Activated B cell treated with CpG ODN at 0.5 μM for 24 hours (primary cell): ENCODE measurements at regions of chr6 and their contacts with region 1.

Region 1: DNA sequence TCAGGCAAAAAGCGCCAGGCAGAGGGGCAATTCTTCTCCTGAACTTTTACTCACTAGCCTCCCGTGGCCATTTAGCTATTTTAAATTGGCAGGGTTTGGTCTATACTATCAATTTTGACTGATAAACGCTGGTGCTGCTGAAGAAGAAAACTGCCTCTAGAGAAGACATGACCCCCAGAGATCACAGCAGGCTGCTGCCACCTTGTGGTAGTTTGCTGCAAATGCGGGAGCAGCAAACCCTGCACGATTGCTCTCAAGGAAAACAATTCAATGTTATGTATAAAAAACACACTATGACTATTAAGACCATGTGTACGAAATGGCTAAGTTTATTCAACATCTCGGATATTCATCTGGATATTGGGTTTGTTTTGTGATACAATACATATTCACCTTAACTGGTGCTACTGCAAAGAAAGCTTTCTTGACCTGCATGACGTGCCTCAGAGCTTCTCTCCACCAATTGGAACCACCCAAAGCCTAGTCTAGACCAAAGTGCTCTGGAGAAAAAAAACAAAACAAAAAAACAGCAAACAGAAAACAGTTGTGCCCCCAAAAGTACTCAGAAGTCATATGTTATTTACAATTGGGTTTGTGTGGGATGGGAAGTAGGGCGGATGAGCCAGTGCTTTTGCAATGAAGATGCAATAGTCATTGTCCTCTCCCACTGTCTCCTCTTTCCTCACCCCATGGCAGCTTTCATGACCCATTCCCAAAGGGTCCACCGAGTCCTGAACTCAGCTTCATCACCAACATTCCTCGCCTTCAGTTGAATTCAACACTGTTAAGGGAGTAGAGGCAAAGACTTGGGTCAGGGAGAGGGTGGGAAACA is 19.6 kb upstream of the IL17F start:
- DNase-seq: peak; percentile 33
- ATAC-seq: peak; percentile 70
- H3K4me3 Mint-ChIP-seq: no peak overlapping the region
- H3K27ac Mint-ChIP-seq: no peak overlapping the region
- H3K4me1 Mint-ChIP-seq: peaks cover 3% of the 10 kb centered on the region
- H3K27me3 Mint-ChIP-seq: no peaks in the 10 kb centered on the region
- CTCF ChIP-seq: peak; percentile 94

Region 2: DNA sequence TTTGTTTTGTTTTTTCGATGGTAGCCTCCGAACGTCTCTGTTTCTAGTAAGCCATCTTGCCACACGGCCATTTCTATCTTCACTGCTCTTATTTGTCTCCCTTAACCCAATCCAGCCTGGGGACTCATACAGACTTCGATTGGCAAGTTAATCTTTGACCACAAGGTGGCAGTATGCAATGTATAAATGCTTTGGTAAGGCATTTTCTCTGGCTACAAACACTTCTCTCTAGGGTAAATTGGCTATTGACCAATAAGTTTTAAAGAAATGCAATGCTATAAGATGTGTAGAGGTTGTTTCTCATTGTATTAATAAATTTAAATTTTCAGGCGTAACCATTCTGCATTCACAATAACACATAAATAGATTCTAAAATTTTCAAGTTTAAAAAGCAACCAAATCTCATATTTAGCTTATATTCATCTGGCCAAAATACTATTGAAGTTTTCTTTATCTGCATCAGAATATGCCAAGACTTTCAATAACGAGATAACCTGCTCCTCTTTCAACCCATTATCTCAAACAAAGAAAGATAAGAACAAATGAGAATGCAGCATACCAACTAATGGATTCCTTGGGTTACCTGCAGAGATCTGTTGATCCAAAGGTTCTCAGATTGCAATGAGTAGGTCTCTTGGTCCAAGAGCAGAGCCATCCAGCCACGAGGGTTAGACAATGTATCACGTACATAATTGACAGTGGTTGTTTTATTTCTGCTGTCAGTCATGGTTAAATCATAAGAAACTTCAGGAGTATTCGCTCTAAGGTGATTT is 408.4 kb before region 1 on chr6:
- CTCF ChIA-PET with region 1: no interaction called
- POLR2A ChIA-PET with region 1: no interaction called
- intact Hi-C with region 1: loop called (anchors 1 kb)
- DNase-seq: no peak
- ATAC-seq: no peak
- H3K4me3 Mint-ChIP-seq: no peak overlapping the region
- H3K27ac Mint-ChIP-seq: no peak overlapping the region
- H3K4me1 Mint-ChIP-seq: no peaks in the 10 kb centered on the region
- H3K27me3 Mint-ChIP-seq: peaks cover 18% of the 10 kb centered on the region
- CTCF ChIP-seq: peak; percentile 30

Region 3: GRCh38 chr6:52063584-52064344 is 200.2 kb before region 1 on chr6:
- CTCF ChIA-PET with region 1: interaction called, 4 read pairs
- POLR2A ChIA-PET with region 1: no interaction called
- intact Hi-C with region 1: loop called (anchors 1 kb)
- DNase-seq: peak; percentile 18
- ATAC-seq: peak; percentile 99
- H3K4me3 Mint-ChIP-seq: peak overlapping the region; percentile 77
- H3K27ac Mint-ChIP-seq: peak overlapping the region; percentile 25
- H3K4me1 Mint-ChIP-seq: peaks cover 7% of the 10 kb centered on the region
- H3K27me3 Mint-ChIP-seq: no peaks in the 10 kb centered on the region
- CTCF ChIP-seq: no peak

Region 4: DNA sequence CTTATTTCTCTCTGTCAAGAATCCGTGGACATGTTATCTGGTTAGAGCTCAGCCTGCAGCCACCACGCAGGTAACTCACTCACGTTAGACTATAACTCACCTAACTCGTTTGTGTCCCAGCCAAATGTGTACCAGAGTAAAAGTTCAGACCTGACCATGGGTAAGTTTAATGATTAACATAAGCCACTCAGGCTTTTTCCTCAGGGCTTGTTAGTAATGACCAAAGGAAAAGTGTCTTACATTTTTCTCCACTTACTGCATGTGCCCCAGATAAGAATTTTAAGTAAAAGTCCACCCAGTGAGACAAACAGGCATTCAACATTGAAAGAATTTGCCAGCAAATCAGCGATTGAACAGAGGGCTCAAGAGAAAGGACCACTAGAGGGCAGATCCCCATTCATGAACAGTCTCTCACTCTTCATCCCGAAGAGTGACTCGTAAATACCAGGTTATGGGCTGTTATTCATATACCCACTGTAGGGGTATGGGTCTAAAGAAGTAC is 176.4 kb before region 1 on chr6 and contains the start of gene PKHD1:
- CTCF ChIA-PET with region 1: no interaction called
- POLR2A ChIA-PET with region 1: no interaction called
- intact Hi-C with region 1: loop called (anchors 1 kb)
- DNase-seq: no peak
- ATAC-seq: no peak
- H3K4me3 Mint-ChIP-seq: no peak within 1 kb of the TSS
- H3K27ac Mint-ChIP-seq: no peak within 1 kb of the TSS
- H3K4me1 Mint-ChIP-seq: no peaks in the 10 kb centered on the region
- H3K27me3 Mint-ChIP-seq: peaks cover 5% of the 10 kb centered on the region
- CTCF ChIP-seq: no peak
- total RNA-seq, gene PKHD1: not detected in 2 replicates

Region 5: DNA sequence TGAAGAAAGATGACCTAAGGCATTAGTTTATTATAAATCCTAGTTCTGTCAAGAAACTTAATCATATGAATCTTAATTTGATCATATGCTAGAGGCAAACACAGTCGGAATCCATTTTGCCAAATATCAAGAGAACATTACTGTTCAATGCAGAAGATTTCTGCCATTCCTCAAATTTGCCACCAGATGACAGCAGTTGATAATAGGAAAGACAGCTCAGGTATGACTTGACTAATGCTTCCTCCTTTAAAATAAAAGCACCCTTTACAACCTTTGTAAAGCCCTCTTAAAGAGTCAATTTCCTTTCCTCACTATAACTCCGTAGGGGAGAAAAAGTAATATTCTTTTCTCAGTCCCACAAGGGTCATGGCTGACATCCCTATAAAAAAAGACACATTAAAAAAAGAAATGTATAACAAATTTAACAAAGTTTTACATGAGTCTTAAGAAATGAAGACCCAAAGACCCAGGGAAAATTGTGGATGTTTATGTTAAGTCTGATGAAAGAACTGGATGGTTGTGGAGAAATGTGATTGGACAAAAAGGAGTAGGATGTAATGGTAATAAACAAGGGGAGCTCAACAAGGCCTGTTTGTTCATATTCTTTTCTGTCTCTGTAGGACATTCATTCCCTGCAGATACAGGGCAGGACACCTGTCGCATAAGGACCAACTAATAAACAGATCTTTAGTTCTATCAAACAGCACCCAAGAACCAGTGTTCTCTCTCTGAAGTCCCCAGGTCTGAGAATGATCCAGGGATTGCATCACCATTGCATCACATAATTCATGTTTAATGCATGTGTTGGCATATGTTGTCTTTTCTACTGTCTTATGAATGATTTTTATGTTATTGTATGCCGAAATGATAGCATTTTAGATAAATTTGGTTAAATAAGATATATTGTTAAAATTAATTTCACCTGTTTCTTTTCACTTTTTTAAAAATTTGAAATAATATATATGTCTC is 100.7 kb before region 1 on chr6:
- CTCF ChIA-PET with region 1: interaction called, 3 read pairs
- POLR2A ChIA-PET with region 1: no interaction called
- intact Hi-C with region 1: loop called (anchors 1 kb)
- DNase-seq: no peak
- ATAC-seq: peak; percentile 34
- H3K4me3 Mint-ChIP-seq: no peak overlapping the region
- H3K27ac Mint-ChIP-seq: no peak overlapping the region
- H3K4me1 Mint-ChIP-seq: no peaks in the 10 kb centered on the region
- H3K27me3 Mint-ChIP-seq: peaks cover 12% of the 10 kb centered on the region
- CTCF ChIP-seq: no peak

Region 6: GRCh38 chr6:52233004-52233403 is 30.9 kb before region 1 on chr6:
- CTCF ChIA-PET with region 1: no interaction called
- POLR2A ChIA-PET with region 1: no interaction called
- intact Hi-C with region 1: no loop called
- DNase-seq: no peak
- ATAC-seq: no peak
- H3K4me3 Mint-ChIP-seq: no peak overlapping the region
- H3K27ac Mint-ChIP-seq: no peak overlapping the region
- H3K4me1 Mint-ChIP-seq: no peaks in the 10 kb centered on the region
- H3K27me3 Mint-ChIP-seq: peaks cover 3% of the 10 kb centered on the region
- CTCF ChIP-seq: no peak

Region 7: DNA sequence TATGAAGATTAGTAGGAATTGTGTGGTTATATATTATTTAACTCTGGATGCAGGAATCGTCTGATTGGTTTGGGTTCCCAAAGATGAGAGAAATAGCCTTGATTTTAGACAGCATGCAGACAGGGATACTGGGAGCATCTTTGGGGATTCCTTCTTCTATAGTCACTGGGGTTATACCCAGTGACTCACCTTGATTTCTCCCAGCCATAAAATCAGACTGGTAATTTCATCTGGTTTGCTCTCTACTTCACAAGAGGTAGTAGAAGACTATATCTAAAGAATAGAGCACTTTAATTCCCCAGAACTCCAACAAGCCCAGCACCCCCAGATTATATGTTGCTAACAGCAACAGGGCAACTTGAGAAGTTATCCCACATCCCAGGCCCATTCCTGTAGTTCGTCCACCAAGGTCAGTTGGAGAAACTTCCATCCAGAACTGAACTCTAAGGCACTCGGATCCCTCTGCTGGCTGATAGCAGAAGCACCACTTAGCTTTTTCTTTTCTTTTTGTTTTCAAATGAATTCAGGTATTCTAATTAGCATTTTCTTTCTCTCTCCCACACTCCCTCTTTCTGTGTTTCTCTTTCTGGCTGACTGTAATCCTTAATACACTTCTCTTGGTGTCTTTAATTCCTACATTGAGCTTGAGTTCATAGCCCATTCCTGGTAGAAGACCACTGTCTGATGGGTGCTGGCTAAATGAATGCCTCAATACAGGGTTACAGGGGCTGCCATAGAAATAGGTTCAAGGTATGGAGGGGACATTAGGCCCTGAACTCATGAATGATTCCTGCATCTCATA is 135.8 kb after region 1 on chr6:
- CTCF ChIA-PET with region 1: interaction called, 10 read pairs
- POLR2A ChIA-PET with region 1: no interaction called
- intact Hi-C with region 1: loop called (anchors 1 kb)
- DNase-seq: no peak
- ATAC-seq: peak; percentile 61
- H3K4me3 Mint-ChIP-seq: no peak overlapping the region
- H3K27ac Mint-ChIP-seq: no peak overlapping the region
- H3K4me1 Mint-ChIP-seq: peaks cover 33% of the 10 kb centered on the region
- H3K27me3 Mint-ChIP-seq: no peaks in the 10 kb centered on the region
- CTCF ChIP-seq: no peak